ENCODE measurements at regions of chr4 and their contacts with region 1.

Region 1: GRCh38 chr4:186297013-186297645 is 31.1 kb downstream of the F11 start:
- DNase-seq: peak; percentile 29
- H3K4me3 ChIP-seq: no peak overlapping the region
- H3K27ac ChIP-seq: no peak overlapping the region
- H3K4me1 ChIP-seq: no peaks in the 10 kb centered on the region
- H3K27me3 ChIP-seq: no peaks in the 10 kb centered on the region
- CTCF ChIP-seq: peak; percentile 62

Region 2: GRCh38 chr4:186472948-186473347 is 175.8 kb after region 1 on chr4:
- CTCF ChIA-PET with region 1: no interaction called
- dilution Hi-C with region 1: no loop called
- in situ Hi-C with region 1: no loop called
- intact Hi-C with region 1: loop called (anchors 1 kb)
- DNase-seq: peak; percentile 7
- H3K4me3 ChIP-seq: no peak overlapping the region
- H3K27ac ChIP-seq: no peak overlapping the region
- H3K4me1 ChIP-seq: no peaks in the 10 kb centered on the region
- H3K27me3 ChIP-seq: no peaks in the 10 kb centered on the region
- CTCF ChIP-seq: peak; percentile 55 to 65

Region 3: GRCh38 chr4:186554539-186554913 is 257.4 kb after region 1 on chr4:
- CTCF ChIA-PET with region 1: no interaction called
- dilution Hi-C with region 1: no loop called
- in situ Hi-C with region 1: no loop called
- intact Hi-C with region 1: loop called (anchors 2 kb)
- DNase-seq: peak; percentile 33
- H3K4me3 ChIP-seq: peak overlapping the region; percentile 31 to 58 (median 49)
- H3K27ac ChIP-seq: no peak overlapping the region
- H3K4me1 ChIP-seq: peaks cover 10% of the 10 kb centered on the region
- H3K27me3 ChIP-seq: no peaks in the 10 kb centered on the region
- CTCF ChIP-seq: peak; percentile 21 to 30